Activated naive CD4-positive, alpha-beta T cell treated with anti-CD3 and anti-CD28 coated beads for 36 hours (primary cell): ENCODE measurements at regions of chr1 and their contacts with region 1.

Region 1: GRCh38 chr1:244970661-244971551 is 106.6 kb upstream of the HNRNPU start:
- DNase-seq: peak; percentile 93
- H3K4me3 Mint-ChIP-seq: peak overlapping the region; percentile 93
- H3K27ac Mint-ChIP-seq: peak overlapping the region; percentile 98
- H3K4me1 Mint-ChIP-seq: peaks cover 11% of the 10 kb centered on the region
- H3K27me3 Mint-ChIP-seq: no peaks in the 10 kb centered on the region

Region 2: DNA sequence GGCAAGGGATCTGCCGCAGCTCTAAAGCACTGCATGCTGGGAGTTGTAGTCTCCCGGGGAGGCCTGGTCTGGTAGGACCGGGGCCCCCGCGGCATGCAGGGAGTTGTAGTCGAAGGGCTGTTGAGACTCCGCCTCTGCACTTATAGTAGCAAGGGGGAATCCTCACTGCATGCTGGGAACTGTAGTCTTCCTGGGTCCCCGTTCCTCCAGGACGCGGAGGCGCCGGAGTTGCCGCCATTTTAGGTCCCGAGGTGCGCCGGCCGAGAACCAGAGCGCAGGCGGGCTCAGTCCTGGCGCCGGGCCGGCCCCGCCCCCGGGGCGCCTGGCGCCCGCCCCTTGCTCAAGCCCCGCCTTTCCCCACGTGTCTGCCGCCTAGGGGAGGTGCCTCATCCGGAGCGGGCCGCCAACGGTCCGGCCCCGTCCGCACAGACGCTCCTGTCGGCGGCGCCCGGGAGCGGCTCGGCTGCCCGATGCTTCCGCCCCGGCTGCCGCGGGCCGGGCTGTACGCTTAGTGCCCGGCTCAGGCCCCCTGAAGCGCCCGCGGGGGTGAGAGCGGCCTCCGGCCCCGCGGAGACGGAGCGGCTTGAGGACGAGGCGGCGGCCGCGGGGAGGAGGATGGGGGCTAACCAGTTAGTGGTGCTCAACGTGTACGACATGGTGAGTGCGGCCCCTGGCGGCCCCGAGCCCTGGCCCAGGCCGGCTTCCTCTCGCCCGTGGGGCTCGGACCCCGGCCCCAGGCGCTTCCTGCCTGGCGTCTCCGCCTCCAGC is 318.0 kb before region 1 on chr1 and contains the start of gene DESI2:
- CTCF ChIA-PET with region 1: no interaction called
- intact Hi-C with region 1: loop called (anchors 1 kb)
- DNase-seq: peak; percentile 99
- H3K4me3 Mint-ChIP-seq: peak within 1 kb of the TSS; percentile 82
- H3K27ac Mint-ChIP-seq: peak within 1 kb of the TSS; percentile 88
- H3K4me1 Mint-ChIP-seq: peaks cover 18% of the 10 kb centered on the region
- H3K27me3 Mint-ChIP-seq: no peaks in the 10 kb centered on the region
- total RNA-seq, gene DESI2: 31.7 to 32.5 TPM

Region 3: DNA sequence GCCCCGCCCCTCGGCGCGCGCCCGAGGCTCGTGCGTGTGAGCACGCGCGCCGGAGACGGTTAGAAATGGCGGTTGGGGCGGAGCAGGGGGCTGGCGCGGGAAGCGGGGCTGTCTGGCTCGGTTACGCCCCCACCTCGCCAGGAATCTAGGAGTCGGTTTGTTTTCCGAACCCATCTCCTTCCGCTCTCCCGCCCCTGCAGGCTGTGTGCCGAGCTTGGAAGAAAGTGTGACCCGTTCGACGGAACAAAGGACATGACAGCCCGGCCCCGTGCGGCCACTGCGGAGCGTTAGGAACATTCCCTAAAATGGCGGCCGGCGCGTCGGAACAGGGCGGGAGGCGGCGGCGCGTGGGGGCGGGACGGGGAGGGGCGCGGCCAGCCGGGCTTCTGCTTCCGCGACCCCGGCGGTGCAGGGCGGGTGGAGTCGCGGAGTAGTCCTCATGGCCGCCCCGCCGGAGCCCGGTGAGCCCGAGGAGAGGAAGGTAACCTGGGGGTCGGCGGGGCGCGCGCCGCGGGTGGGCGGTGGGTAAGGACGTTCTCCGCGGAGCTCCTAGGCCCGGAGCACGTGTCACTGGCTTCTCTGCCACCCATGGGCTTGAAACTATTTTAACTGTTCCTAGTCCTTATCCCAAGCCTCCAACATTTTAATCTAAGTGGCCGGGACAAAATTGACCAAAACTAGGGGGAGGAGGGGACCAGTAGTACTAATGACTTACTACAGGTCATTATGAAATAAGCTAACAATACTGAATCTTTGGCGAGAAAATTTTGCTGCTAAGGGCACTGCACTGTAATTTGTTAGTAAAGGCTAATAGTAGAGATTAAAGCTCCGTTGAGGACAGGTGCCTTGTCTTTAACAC is 135.4 kb before region 1 on chr1 and contains the start of gene COX20:
- CTCF ChIA-PET with region 1: no interaction called
- intact Hi-C with region 1: loop called (anchors 1 kb)
- DNase-seq: peak; percentile 85
- H3K4me3 Mint-ChIP-seq: peak within 1 kb of the TSS; percentile 94
- H3K27ac Mint-ChIP-seq: peak within 1 kb of the TSS; percentile 99
- H3K4me1 Mint-ChIP-seq: peaks cover 38% of the 10 kb centered on the region
- H3K27me3 Mint-ChIP-seq: no peaks in the 10 kb centered on the region
- total RNA-seq, gene COX20: 21.4 to 24.2 TPM

Region 4: GRCh38 chr1:245000872-245001188 is 29.9 kb after region 1 on chr1:
- CTCF ChIA-PET with region 1: no interaction called
- intact Hi-C with region 1: no loop called
- DNase-seq: no peak
- H3K4me3 Mint-ChIP-seq: no peak overlapping the region
- H3K27ac Mint-ChIP-seq: no peak overlapping the region
- H3K4me1 Mint-ChIP-seq: no peaks in the 10 kb centered on the region
- H3K27me3 Mint-ChIP-seq: no peaks in the 10 kb centered on the region

Region 5: GRCh38 chr1:245045087-245045881 is 74.4 kb after region 1 on chr1:
- CTCF ChIA-PET with region 1: interaction called, 6 read pairs
- intact Hi-C with region 1: loop called (anchors 2 kb)
- DNase-seq: no peak
- H3K4me3 Mint-ChIP-seq: no peak overlapping the region
- H3K27ac Mint-ChIP-seq: no peak overlapping the region
- H3K4me1 Mint-ChIP-seq: no peaks in the 10 kb centered on the region
- H3K27me3 Mint-ChIP-seq: no peaks in the 10 kb centered on the region

Region 6: DNA sequence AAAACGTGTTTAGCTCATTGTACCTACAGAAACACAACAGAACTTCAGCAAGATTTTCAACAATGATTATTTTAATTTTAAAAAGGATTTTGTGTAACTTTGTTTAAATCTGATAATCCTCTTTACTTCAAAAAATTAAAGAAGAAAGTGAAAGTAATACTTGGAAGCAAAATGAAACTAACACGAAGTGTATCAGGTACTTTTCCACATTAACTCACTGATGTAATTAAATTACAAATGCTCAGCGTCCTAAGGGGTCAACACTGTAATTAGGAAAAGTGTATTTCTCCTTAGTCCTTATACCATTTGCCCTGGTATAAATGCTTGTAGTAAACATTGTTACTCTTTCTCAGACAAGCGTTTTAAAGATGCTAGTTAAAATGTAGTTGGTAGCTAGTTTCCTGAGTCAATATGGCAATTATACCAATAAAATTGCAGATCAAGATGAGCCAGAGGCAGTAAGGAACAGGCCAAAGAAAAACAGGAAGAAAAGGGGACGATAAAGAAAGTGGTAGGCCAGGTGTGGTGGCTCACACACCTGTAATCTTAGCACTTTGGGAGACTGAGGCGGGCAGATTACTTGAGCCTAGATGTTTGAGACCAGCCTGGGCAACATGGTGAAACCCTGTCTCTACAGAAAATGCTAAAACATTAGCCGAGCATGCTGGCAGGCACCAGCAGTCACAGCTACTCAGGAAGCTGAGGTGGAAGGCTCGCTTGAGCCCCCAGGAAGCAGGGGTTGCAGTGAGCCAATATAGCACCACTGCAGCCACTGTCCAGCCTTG is 983.2 kb after region 1 on chr1:
- CTCF ChIA-PET with region 1: no interaction called
- intact Hi-C with region 1: loop called (anchors 2 kb)
- DNase-seq: peak; percentile 17
- H3K4me3 Mint-ChIP-seq: peak overlapping the region; percentile 54
- H3K27ac Mint-ChIP-seq: peak overlapping the region; percentile 87
- H3K4me1 Mint-ChIP-seq: peaks cover 27% of the 10 kb centered on the region
- H3K27me3 Mint-ChIP-seq: no peaks in the 10 kb centered on the region